T-cell (primary cell): ENCODE measurements at regions of chr12 and their contacts with region 1.

Region 1: GRCh38 chr12:96445691-96446583 is 43.4 kb upstream of the CFAP54 start:
- DNase-seq: peak in 34 of 35 experiments; percentile 12 to 91 (median 57)
- ATAC-seq: peak; percentile 96 to 100 (median 99)
- H3K4me3 ChIP-seq: no peak overlapping the region
- H3K4me3 Mint-ChIP-seq: peak overlapping the region; percentile 32 to 63 (median 42)
- H3K27ac ChIP-seq: peak overlapping the region; percentile 97
- H3K27ac Mint-ChIP-seq: peak overlapping the region; percentile 94
- H3K4me1 ChIP-seq: peaks cover 19 to 25% of the 10 kb centered on the region in 2 experiments
- H3K4me1 Mint-ChIP-seq: peaks cover 40 to 45% (median 42%) of the 10 kb centered on the region in 3 donors
- H3K27me3 ChIP-seq: no peaks in the 10 kb centered on the region
- H3K27me3 Mint-ChIP-seq: no peaks in the 10 kb centered on the region

Region 2: DNA sequence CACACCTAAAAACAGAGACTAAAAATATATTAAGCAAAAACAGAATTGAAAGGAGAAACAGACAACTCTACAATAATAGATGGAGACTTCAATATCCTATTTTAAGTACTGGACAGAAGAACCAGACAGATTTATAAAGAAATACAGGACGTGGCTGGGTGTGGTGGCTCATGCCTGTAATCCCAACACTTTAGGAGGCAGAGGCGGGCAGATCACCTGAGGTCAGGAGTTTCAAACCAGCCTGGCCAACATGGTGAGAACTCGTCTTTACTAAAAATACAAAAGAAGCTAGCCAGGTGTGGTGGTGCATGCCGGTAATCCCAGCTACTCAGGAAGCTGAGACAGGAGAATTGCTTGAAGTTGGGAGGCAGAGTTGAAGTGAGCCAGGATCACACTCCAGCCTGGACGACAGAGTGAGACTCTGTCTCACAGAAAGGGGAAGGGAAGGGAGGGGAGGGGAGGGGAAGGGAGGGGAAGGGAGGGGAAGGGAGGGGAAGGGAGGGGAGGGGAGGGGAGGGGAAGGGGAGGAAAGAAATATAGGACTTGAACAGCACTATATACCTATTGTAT is 98.7 kb before region 1 on chr12:
- CTCF ChIA-PET with region 1: no interaction called
- POLR2A ChIA-PET with region 1: no interaction called
- DNase-seq: no peak
- ATAC-seq: peak in 1 of 4 experiments; percentile 15
- H3K4me3 ChIP-seq: no peak overlapping the region
- H3K4me3 Mint-ChIP-seq: peak overlapping the region; percentile 51 to 62 (median 60)
- H3K27ac ChIP-seq: no peak overlapping the region
- H3K27ac Mint-ChIP-seq: peak overlapping the region; percentile 71 to 84
- H3K4me1 ChIP-seq: peaks cover 5 to 26% of the 10 kb centered on the region in 2 experiments
- H3K4me1 Mint-ChIP-seq: peaks cover 71 to 84% (median 79%) of the 10 kb centered on the region in 3 donors
- H3K27me3 ChIP-seq: no peaks in the 10 kb centered on the region
- H3K27me3 Mint-ChIP-seq: no peaks in the 10 kb centered on the region

Region 3: GRCh38 chr12:96399919-96400797 is 45.8 kb before region 1 on chr12 and contains the start of gene CDK17:
- CTCF ChIA-PET with region 1: interaction called in 1 of 2 experiments, 49 read pairs
- POLR2A ChIA-PET with region 1: interaction called, 10 to 53 read pairs
- DNase-seq: peak; percentile 78 to 95 (median 89)
- ATAC-seq: peak; percentile 69 to 84 (median 73)
- H3K4me3 ChIP-seq: peak within 1 kb of the TSS; percentile 74 to 96
- H3K4me3 Mint-ChIP-seq: peak within 1 kb of the TSS; percentile 89 to 98 (median 95)
- H3K27ac ChIP-seq: peak within 1 kb of the TSS; percentile 94
- H3K27ac Mint-ChIP-seq: peak within 1 kb of the TSS; percentile 96 to 97
- H3K4me1 ChIP-seq: peaks cover 16 to 32% of the 10 kb centered on the region in 2 experiments
- H3K4me1 Mint-ChIP-seq: peaks cover 44 to 49% (median 49%) of the 10 kb centered on the region in 3 donors
- H3K27me3 ChIP-seq: no peaks in the 10 kb centered on the region
- H3K27me3 Mint-ChIP-seq: no peaks in the 10 kb centered on the region
- total RNA-seq, gene CDK17: 56.4 to 114 (median 72.2) TPM

Region 4: DNA sequence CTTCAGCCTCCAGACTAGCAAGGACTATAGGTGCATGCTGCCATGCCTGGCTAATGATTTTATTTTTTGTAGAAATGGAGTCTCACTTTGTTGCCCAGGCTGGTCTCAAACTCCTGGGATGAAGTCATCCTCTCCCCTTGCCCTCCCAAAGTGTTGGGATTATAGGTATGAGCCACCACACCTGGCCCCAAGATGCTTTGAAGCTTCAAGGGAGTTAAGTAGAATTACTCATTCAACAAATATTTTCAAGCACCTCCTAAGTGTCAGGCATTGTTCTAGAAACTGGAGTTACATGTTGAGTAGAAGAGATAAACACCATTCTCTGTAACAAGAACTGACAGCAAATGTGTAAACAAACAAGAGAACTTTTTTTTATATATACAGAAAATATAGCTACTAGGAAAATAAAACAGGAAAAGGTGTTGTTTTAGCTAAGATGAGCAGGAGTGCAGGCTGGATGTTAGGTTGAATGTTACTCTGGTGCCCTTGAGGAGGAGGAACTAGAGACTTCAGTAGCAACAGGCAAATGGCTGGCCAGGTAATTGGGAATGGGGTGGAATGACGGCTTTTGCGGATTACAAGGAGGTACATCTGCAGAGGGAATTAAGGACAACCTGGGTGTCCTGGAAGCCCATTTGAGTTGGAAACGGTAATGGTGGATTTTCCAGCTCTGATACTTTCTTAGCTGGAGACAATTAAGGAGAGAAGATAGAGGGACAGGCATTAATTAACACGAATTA is 11.4 kb after region 1 on chr12:
- CTCF ChIA-PET with region 1: interaction called, 6 to 7 read pairs
- POLR2A ChIA-PET with region 1: interaction called, 4 to 20 read pairs
- DNase-seq: no peak
- ATAC-seq: no peak
- H3K4me3 ChIP-seq: no peak overlapping the region
- H3K4me3 Mint-ChIP-seq: no peak overlapping the region
- H3K27ac ChIP-seq: no peak overlapping the region
- H3K27ac Mint-ChIP-seq: peak overlapping the region; percentile 4 to 7
- H3K4me1 ChIP-seq: no peaks in the 10 kb centered on the region
- H3K4me1 Mint-ChIP-seq: peaks cover 0 to 11% (median 0%) of the 10 kb centered on the region in 3 donors
- H3K27me3 ChIP-seq: no peaks in the 10 kb centered on the region
- H3K27me3 Mint-ChIP-seq: no peaks in the 10 kb centered on the region

Region 5: DNA sequence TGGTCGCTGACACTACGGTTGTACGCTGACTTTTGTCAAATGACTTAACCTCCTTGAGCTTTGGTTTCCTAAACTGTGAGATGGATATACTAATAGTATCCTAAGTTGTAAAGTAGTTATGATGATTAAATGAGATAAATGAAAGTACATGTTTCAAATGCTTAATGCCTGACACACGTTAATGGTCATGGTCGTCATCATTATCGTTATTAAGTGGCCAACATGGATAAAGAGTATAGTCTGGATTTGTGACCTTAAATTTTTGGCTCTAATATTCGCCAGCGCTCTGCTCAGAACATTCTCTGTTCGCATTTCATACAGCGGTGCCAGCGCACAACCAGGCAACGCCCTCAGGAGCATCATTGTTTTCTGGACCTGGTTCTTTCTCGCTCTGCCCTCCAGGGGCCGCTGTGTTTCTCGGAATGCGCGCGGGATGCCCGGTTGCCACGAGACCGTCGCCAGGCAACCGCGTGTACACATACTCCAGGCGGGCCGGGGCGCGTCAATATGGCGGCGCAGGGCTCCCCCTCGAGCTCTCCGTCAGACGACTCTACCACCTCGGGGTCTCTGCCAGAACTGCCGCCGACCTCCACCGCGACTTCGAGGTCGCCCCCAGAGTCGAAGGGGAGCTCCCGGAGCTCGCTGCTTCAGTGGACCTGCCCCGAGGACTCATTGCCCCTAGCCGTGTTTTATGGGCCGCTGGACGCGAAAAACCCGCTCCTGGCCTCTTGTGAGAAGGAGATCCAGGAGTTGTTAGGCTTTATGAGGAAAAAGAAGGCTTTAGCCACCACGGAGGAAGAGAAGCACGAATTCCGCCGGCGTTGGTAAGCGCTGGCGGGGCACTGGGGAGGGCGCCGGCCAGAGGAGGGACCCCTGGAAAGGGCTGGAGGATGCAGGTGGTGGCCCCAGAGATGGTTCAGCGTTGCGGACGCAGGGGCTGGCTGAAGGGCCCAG is 43.4 kb after region 1 on chr12 and contains the start of gene CFAP54:
- CTCF ChIA-PET with region 1: interaction called, 5 to 21 read pairs
- POLR2A ChIA-PET with region 1: interaction called in 1 of 2 experiments, 12 read pairs
- DNase-seq: peak; percentile 91 to 98 (median 95)
- ATAC-seq: peak; percentile 89 to 92 (median 92)
- H3K4me3 ChIP-seq: peak within 1 kb of the TSS; percentile 80 to 85
- H3K4me3 Mint-ChIP-seq: peak within 1 kb of the TSS; percentile 85 to 90 (median 85)
- H3K27ac ChIP-seq: peak within 1 kb of the TSS; percentile 43
- H3K27ac Mint-ChIP-seq: peak within 1 kb of the TSS; percentile 63 to 74
- H3K4me1 ChIP-seq: peaks cover 3 to 27% of the 10 kb centered on the region in 2 experiments
- H3K4me1 Mint-ChIP-seq: peaks cover 28 to 42% (median 31%) of the 10 kb centered on the region in 3 donors
- H3K27me3 ChIP-seq: peaks cover 0 to 6% of the 10 kb centered on the region in 2 experiments
- H3K27me3 Mint-ChIP-seq: no peaks in the 10 kb centered on the region
- total RNA-seq, gene CFAP54: 0.47 to 0.95 (median 0.90) TPM

Region 6: GRCh38 chr12:96698521-96698920 is 252.6 kb after region 1 on chr12:
- CTCF ChIA-PET with region 1: no interaction called
- POLR2A ChIA-PET with region 1: no interaction called
- DNase-seq: no peak
- ATAC-seq: no peak
- H3K4me3 ChIP-seq: no peak overlapping the region
- H3K4me3 Mint-ChIP-seq: no peak overlapping the region
- H3K27ac ChIP-seq: no peak overlapping the region
- H3K27ac Mint-ChIP-seq: no peak overlapping the region
- H3K4me1 ChIP-seq: no peaks in the 10 kb centered on the region
- H3K4me1 Mint-ChIP-seq: no peaks in the 10 kb centered on the region
- H3K27me3 ChIP-seq: no peaks in the 10 kb centered on the region
- H3K27me3 Mint-ChIP-seq: peaks cover 15 to 30% of the 10 kb centered on the region in 2 donors

Region 7: GRCh38 chr12:97112136-97112535 is 666.2 kb after region 1 on chr12:
- CTCF ChIA-PET with region 1: no interaction called
- POLR2A ChIA-PET with region 1: interaction called in 1 of 2 experiments, 11 read pairs
- DNase-seq: no peak
- ATAC-seq: no peak
- H3K4me3 ChIP-seq: no peak overlapping the region
- H3K4me3 Mint-ChIP-seq: no peak overlapping the region
- H3K27ac ChIP-seq: no peak overlapping the region
- H3K27ac Mint-ChIP-seq: no peak overlapping the region
- H3K4me1 ChIP-seq: no peaks in the 10 kb centered on the region
- H3K4me1 Mint-ChIP-seq: no peaks in the 10 kb centered on the region
- H3K27me3 ChIP-seq: no peaks in the 10 kb centered on the region
- H3K27me3 Mint-ChIP-seq: peaks cover 6 to 8% of the 10 kb centered on the region in 2 donors